Ovary (tissue), 10 donors: ENCODE measurements at regions of chr1 and their contacts with region 1.

Region 1: DNA sequence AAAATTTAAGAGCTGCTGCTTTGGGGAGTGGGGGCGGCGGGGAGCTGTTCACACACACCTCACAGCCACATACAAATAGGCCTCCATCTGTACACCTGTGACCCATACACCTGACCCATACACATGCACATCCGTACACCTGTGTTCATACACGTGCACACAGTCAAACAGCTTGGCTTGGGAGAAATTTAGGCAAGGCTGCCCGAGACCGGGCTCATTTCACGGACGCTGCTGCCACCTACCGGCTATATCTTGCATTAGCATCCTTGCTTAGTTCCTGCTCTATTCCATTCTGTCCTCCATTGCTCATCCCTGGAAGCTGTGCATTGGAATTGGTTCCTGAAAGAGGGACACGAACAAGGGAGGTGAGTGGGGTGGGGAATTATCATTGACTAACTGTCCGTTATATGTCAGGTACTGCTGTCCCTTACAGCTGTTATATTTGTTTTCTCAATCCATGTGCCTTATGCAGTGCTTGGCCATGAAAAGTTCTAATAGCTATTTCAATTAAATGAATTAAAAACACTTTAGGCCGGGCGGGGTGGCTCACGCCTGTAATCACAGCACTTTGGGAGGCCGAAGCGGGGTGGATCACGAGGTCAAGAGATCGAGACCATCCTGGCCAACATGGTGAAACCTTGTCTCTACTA is 37.1 kb upstream of the EPB41 start:
- DNase-seq: peak; percentile 72 to 86 (median 80)
- H3K4me3 ChIP-seq: no peak overlapping the region
- H3K27ac ChIP-seq: no peak overlapping the region
- H3K4me1 ChIP-seq: peaks cover 1% of the 10 kb centered on the region
- H3K27me3 ChIP-seq: no peaks in the 10 kb centered on the region
- CTCF ChIP-seq: peak; percentile 59 to 89 (median 80)
- EP300 ChIP-seq: no peak
- POLR2A ChIP-seq: no peak

Region 2: DNA sequence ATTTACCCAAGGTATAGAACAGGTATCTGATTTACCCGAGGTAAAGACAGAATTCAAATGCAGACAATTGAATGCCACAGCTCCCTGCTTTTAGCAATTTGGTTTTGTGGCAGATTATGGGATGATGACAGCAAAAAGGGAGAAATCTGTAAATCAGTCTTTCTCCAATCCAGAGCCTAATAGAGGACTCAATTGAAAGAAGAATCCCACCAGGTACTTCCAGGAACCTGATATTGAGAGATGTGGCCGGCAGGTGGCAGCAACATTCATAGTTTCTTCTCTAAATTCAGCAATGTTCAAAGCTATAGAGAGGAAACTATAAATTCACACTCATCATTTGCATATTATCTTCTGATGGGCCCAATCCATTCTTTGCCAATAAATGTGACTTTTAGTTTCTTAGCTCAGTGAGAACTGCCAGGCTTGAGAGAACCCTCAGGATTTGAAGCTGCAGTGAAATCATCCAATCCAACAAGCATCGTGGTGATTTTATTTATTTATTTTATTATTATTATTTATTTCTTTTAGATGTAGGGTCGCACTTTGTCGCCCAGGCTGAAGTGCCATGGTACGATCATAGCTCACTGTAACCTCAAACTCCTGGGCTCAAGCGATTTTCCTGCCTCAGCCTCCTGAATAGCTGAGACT is 517.5 kb before region 1 on chr1:
- intact Hi-C with region 1: loop called in 2 of 4 experiments (anchors 2 to 5 kb)
- DNase-seq: peak; percentile 58 to 84 (median 78)
- H3K4me3 ChIP-seq: no peak overlapping the region
- H3K27ac ChIP-seq: no peak overlapping the region
- H3K4me1 ChIP-seq: no peaks in the 10 kb centered on the region
- H3K27me3 ChIP-seq: no peaks in the 10 kb centered on the region
- CTCF ChIP-seq: peak; percentile 37 to 55 (median 40)
- EP300 ChIP-seq: no peak
- POLR2A ChIP-seq: no peak

Region 3: DNA sequence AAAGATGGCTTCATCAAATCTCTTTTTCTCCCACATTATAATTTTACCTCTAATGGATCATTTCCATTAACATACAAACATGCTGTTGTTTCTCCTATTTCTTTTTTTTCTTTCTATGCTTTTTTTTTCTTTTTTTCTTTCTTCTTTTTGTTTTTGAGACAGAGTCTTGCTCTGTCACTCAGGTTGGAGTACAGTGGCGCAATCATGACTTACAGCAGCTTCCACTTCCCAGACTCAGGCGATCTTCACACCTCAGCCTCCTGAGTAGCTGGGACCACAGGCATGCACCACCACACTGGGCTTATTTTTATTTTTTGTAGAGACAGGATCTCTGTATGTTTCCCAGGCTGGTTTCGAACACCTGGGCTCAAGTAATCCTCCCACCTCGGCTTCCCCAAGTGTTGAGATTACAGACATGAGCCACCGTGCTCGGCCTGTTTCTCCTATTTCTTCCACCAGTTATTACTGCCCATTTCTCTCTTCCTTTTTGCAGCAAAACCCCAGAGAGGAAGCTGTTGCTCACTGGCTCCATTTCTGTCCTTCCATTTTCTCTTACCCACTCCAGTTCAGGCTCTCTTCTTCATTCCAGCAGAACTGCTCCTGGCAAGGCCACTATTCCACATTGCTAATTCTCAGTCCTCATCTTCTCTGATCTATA is 97.4 kb before region 1 on chr1:
- intact Hi-C with region 1: loop called in 3 of 4 experiments (anchors 2 to 5 kb)
- DNase-seq: no peak
- H3K4me3 ChIP-seq: no peak overlapping the region
- H3K27ac ChIP-seq: no peak overlapping the region
- H3K4me1 ChIP-seq: peaks cover 7% of the 10 kb centered on the region
- H3K27me3 ChIP-seq: no peaks in the 10 kb centered on the region
- CTCF ChIP-seq: no peak
- EP300 ChIP-seq: no peak
- POLR2A ChIP-seq: no peak

Region 4: GRCh38 chr1:28835237-28835650 is 42.0 kb before region 1 on chr1:
- intact Hi-C with region 1: no loop called
- DNase-seq: no peak
- H3K4me3 ChIP-seq: no peak overlapping the region
- H3K27ac ChIP-seq: no peak overlapping the region
- H3K4me1 ChIP-seq: no peaks in the 10 kb centered on the region
- H3K27me3 ChIP-seq: no peaks in the 10 kb centered on the region
- CTCF ChIP-seq: no peak
- EP300 ChIP-seq: no peak
- POLR2A ChIP-seq: no peak